ENCODE measurements at regions of chr12 and their contacts with region 1.

Region 1: DNA sequence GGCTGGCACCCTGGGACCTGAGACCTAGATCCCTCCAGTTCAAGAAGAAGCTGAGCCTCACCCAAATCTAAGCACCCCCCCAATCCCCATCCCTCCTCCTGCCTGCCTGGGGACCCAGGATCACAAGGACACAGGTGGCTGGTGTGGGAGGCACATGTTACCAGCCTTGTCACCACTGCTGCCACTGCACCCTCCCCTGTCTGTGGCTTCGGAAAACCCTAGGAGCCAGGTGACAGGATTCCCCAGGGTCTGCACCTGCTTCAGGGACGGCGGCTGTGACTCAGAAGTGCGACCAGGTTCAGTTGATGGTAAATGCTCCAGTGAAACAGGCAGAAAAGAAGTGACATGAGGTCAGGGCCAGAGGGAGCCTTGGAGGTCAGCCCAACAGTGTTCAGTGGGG is 62.8 kb upstream of the FAM222A start:
- DNase-seq: no peak
- H3K4me3 ChIP-seq: no peak overlapping the region
- H3K27ac ChIP-seq: no peak overlapping the region
- H3K4me1 ChIP-seq: no peaks in the 10 kb centered on the region
- H3K27me3 ChIP-seq: peaks cover 51% of the 10 kb centered on the region
- CTCF ChIP-seq: no peak

Region 2: GRCh38 chr12:109625131-109625559 is 25.7 kb before region 1 on chr12:
- CTCF ChIA-PET with region 1: interaction called, 15 read pairs
- POLR2A ChIA-PET with region 1: no interaction called
- intact Hi-C with region 1: no loop called
- DNase-seq: peak; percentile 15 to 53
- H3K4me3 ChIP-seq: no peak overlapping the region
- H3K27ac ChIP-seq: no peak overlapping the region
- H3K4me1 ChIP-seq: no peaks in the 10 kb centered on the region
- H3K27me3 ChIP-seq: peaks cover 61% of the 10 kb centered on the region
- CTCF ChIP-seq: no peak; the same call in 1 of the 2 replicates

Region 3: DNA sequence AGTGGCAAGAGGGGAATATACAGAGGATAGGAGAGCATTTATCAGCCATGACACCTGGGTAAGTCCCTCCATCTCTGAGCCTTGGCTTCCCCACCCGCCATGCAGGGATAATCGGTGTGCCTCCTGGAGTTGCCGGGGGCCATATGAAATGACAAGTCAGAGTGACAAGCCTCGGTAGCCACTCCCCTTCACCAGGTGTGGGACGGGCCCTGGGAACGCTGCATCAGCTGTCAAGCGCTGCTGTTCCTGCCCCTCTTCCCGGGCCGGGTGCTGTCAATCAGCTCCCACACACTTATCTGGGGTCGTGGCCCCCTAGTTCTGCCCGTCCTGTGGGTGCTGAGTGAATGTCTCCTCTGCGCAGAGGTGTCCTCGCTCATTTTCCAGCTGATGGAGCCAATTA is 20.0 kb before region 1 on chr12:
- CTCF ChIA-PET with region 1: interaction called, 15 read pairs
- POLR2A ChIA-PET with region 1: no interaction called
- intact Hi-C with region 1: no loop called
- DNase-seq: peak in 1 of 2 experiments; percentile 14
- H3K4me3 ChIP-seq: no peak overlapping the region
- H3K27ac ChIP-seq: no peak overlapping the region
- H3K4me1 ChIP-seq: no peaks in the 10 kb centered on the region
- H3K27me3 ChIP-seq: peaks cover 62% of the 10 kb centered on the region
- CTCF ChIP-seq: no peak

Region 4: GRCh38 chr12:109727039-109727723 is 76.4 kb after region 1 on chr12:
- CTCF ChIA-PET with region 1: no interaction called
- POLR2A ChIA-PET with region 1: no interaction called
- intact Hi-C with region 1: no loop called
- DNase-seq: no peak
- H3K4me3 ChIP-seq: no peak overlapping the region
- H3K27ac ChIP-seq: no peak overlapping the region
- H3K4me1 ChIP-seq: no peaks in the 10 kb centered on the region
- H3K27me3 ChIP-seq: no peaks in the 10 kb centered on the region
- CTCF ChIP-seq: no peak

Measured in PC-9 (cell line).